Activated B cell treated with CpG ODN at 0.5 μM for 24 hours (primary cell): ENCODE measurements at regions of chr16 and their contacts with region 1.

Region 1: GRCh38 chr16:2023098-2023925 is 3.4 kb upstream of the NHERF2 start:
- DNase-seq: peak; percentile 97
- ATAC-seq: peak; percentile 94
- H3K4me3 Mint-ChIP-seq: peak overlapping the region; percentile 79
- H3K27ac Mint-ChIP-seq: peak overlapping the region; percentile 73
- H3K4me1 Mint-ChIP-seq: peaks cover 24% of the 10 kb centered on the region
- H3K27me3 Mint-ChIP-seq: peaks cover 27% of the 10 kb centered on the region
- CTCF ChIP-seq: peak; percentile 82

Region 2: DNA sequence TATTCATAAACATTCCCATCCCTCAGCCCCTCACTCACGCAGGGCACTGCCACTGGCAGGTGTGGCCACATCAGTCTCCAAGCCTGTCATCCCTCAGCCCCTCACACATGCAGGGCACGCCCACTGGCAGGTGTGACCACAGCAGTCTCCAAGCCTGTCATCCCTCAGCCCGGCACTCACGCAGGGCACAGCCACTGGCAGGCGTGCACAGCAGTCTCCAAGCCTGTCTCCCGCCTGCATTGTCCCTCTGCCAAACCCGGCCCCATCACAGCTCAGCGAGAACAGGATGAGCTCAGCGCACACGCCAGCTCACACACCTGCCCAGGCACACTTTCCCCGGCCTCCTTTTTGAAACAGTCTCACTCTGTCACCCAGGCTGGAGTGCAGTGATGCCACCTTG is 929.4 kb after region 1 on chr16:
- CTCF ChIA-PET with region 1: no interaction called
- POLR2A ChIA-PET with region 1: interaction called, 11 read pairs
- intact Hi-C with region 1: no loop called
- DNase-seq: no peak
- ATAC-seq: no peak
- H3K4me3 Mint-ChIP-seq: no peak overlapping the region
- H3K27ac Mint-ChIP-seq: no peak overlapping the region
- H3K4me1 Mint-ChIP-seq: no peaks in the 10 kb centered on the region
- H3K27me3 Mint-ChIP-seq: peaks cover 14% of the 10 kb centered on the region
- CTCF ChIP-seq: no peak